B cell (primary cell): ENCODE measurements at regions of chr12 and their contacts with region 1.

Region 1: DNA sequence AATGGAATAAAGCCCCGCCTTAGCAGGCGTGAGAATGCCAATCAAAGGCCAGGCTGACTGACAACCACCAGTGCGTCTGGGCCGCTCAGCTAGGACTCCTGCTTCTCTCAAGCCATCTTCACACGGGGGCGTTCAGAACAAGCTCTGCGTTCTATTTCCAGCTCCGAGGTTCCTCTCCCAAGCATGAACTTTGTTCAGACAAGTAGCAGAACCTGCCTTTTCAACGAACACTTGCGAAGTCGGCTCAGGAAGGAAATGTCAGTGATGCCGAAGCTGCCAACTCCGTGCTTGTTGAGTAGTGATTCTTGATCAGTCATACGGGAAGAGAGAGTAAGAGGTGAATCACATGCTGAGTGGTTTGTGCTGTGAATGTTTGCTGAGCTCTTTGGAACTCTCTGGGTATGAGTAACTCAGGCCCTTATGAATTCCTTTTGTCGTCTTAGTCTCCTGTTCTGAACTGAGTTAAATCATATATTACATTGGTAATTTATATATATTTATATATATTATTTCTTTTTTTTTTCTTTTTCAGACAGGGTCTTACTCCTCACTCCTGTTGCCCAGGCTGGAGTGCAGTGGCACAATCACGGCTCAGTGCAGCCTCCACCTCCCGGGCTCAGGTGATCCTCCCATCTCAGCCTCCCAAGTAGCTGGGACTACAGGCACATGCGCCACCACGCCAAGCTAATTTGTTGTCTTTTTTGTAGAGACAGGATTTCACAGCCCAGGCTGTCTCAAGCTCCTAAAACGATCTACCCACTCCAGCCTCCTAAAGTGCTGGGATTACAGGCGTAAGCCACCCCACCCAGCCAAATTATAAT is 29.4 kb upstream of the BCL7A start:
- DNase-seq: peak; percentile 86
- ATAC-seq: peak; percentile 89
- H3K4me3 ChIP-seq: peak overlapping the region in 1 of 5 experiments; percentile 9
- H3K4me3 Mint-ChIP-seq: peak overlapping the region; percentile 84
- H3K27ac ChIP-seq: peak overlapping the region; percentile 62 to 70
- H3K27ac Mint-ChIP-seq: peak overlapping the region; percentile 96
- H3K4me1 ChIP-seq: peaks cover 38% of the 10 kb centered on the region in 2 donors
- H3K4me1 Mint-ChIP-seq: peaks cover 44% of the 10 kb centered on the region
- H3K27me3 ChIP-seq: no peaks in the 10 kb centered on the region
- H3K27me3 Mint-ChIP-seq: no peaks in the 10 kb centered on the region
- CTCF ChIP-seq: no peak

Region 2: DNA sequence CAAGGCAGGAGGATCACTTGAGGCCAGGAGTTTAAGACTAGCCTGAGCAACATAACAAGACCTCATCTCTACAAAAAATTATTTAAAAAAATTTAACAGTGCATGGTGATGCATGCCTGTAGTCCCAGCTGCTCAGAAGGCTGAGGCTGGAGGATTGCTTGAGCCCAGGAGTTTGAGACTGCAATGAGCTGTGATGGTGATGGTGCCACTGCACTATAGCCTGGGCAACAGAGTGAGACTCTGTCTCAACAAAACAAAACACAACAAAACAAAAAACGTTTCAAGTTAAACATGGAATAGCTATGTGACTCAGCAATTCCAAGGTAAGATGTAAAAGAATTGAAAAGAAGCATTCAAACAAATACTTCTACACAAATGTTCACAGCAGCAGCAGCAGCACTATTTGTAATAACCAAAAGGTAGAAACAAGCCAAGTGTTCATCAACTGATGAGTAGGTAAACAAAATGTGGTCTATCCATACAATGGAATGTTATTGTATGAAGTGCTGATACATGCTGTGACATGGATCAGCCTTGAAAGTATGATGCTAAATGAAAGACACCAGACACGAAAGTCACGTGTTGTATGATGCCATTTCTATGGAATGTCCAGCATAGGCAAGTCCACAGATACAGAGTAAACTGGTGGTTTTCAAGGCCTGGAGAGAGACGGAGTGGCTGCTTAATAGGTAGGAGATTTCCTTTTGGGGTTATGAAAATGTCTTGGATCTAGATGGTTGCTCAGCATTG is 42.4 kb before region 1 on chr12:
- CTCF ChIA-PET with region 1: no interaction called
- POLR2A ChIA-PET with region 1: no interaction called
- intact Hi-C with region 1: no loop called
- DNase-seq: no peak
- ATAC-seq: no peak
- H3K4me3 ChIP-seq: no peak overlapping the region
- H3K4me3 Mint-ChIP-seq: no peak overlapping the region
- H3K27ac ChIP-seq: no peak overlapping the region
- H3K27ac Mint-ChIP-seq: no peak overlapping the region
- H3K4me1 ChIP-seq: no peaks in the 10 kb centered on the region
- H3K4me1 Mint-ChIP-seq: no peaks in the 10 kb centered on the region
- H3K27me3 ChIP-seq: no peaks in the 10 kb centered on the region
- H3K27me3 Mint-ChIP-seq: no peaks in the 10 kb centered on the region
- CTCF ChIP-seq: no peak

Region 3: DNA sequence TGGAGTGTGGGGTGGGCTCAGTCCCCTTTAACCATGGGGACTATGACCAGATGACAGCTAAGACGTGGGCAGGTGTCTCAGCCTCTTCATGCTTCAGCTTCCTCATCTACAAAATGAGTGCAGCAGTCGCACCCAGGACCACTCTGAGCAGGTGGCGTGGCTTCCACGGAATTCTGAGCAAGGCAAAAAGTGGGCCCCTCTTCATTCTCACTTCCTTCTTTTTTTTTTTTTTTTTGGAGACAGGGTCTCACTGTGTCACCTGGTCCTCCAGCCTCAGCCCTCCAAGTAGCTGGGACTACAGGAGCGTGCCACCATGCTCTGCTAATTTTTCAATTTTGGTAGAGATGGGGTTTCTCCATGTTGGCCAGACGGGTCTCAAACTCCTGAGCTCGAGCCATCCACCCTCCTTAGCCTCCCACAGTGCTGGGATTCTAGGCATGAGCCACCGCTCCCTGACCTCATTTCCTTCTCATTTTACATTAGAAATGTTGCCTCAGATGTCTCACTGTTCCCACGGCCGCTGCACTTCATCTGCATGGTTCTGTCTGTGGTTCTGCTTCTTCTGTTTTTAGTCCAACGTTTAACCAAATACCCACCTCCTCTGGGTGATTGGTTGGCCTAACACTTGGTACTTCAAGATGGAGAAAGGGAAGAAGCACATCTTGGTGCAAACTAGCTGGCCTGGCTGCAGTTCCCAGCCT is 11.9 kb before region 1 on chr12:
- CTCF ChIA-PET with region 1: interaction called, 14 read pairs
- POLR2A ChIA-PET with region 1: interaction called, 17 read pairs
- intact Hi-C with region 1: loop called (anchors 1 kb)
- DNase-seq: peak; percentile 85
- ATAC-seq: peak; percentile 74
- H3K4me3 ChIP-seq: peak overlapping the region in 4 of 5 experiments; percentile 2 to 39 (median 12)
- H3K4me3 Mint-ChIP-seq: peak overlapping the region; percentile 81
- H3K27ac ChIP-seq: peak overlapping the region; percentile 63 to 81
- H3K27ac Mint-ChIP-seq: peak overlapping the region; percentile 95
- H3K4me1 ChIP-seq: peaks cover 53 to 64% of the 10 kb centered on the region in 2 donors
- H3K4me1 Mint-ChIP-seq: peaks cover 55% of the 10 kb centered on the region
- H3K27me3 ChIP-seq: no peaks in the 10 kb centered on the region
- H3K27me3 Mint-ChIP-seq: no peaks in the 10 kb centered on the region
- CTCF ChIP-seq: no peak

Region 4: GRCh38 chr12:122021822-122022526 is 29.7 kb after region 1 on chr12 and contains the start of gene BCL7A:
- CTCF ChIA-PET with region 1: interaction called, 16 read pairs
- POLR2A ChIA-PET with region 1: interaction called, 19 read pairs
- intact Hi-C with region 1: no loop called
- DNase-seq: peak; percentile 90
- ATAC-seq: peak; percentile 73
- H3K4me3 ChIP-seq: peak within 1 kb of the TSS; percentile 26 to 86 (median 78)
- H3K4me3 Mint-ChIP-seq: peak within 1 kb of the TSS; percentile 94
- H3K27ac ChIP-seq: peak within 1 kb of the TSS; percentile 67 to 80
- H3K27ac Mint-ChIP-seq: peak within 1 kb of the TSS; percentile 98
- H3K4me1 ChIP-seq: peaks cover 32 to 51% of the 10 kb centered on the region in 2 donors
- H3K4me1 Mint-ChIP-seq: peaks cover 38% of the 10 kb centered on the region
- H3K27me3 ChIP-seq: no peaks in the 10 kb centered on the region
- H3K27me3 Mint-ChIP-seq: no peaks in the 10 kb centered on the region
- CTCF ChIP-seq: no peak
- total RNA-seq, gene BCL7A: 75.6 and 75.9 TPM in 2 replicates

Region 5: DNA sequence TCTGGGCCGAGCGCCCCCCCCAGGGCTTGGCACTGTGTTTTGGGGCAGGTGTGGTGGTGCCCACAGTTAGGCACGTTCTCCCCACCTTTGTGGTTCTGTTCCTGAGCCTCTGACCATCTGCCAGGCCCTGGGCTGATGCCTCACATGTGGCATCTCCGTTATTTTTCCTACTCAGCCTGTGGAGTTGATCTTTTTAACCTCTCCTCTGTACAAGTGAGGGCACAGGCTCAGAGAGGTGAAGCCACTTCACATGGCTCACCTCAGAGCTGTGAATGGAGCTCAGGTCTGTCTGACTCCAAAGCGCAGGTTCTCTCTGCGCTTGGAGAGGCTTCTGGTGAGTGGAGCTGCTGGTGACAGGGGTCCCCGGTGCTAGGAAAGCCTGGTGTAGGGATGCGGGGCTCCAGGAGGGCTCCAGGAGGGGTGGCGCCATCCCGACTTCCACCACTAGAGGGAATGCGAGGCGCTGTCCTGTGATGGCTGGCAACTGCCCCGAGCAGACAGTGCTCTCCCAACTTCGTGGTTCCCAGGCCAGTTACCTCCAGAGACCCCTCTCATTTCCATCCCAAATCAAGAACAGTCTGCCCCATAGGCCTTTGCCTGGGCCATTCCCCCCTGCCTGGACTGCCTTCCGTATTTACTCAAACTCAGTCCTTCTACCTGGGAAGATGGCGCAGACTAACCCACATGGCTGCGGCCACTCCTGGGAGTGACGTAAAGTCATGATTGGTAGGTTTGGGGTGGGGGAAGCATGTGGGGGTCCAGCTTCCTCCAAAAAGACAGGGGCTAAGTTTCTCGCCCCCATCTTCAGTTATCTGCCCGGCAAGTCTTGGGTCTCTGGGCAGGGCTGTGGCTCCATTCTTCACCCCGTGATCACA is 39.3 kb after region 1 on chr12:
- CTCF ChIA-PET with region 1: interaction called, 16 read pairs
- POLR2A ChIA-PET with region 1: interaction called, 3 read pairs
- intact Hi-C with region 1: no loop called
- DNase-seq: peak; percentile 70
- ATAC-seq: peak; percentile 39
- H3K4me3 ChIP-seq: no peak overlapping the region
- H3K4me3 Mint-ChIP-seq: peak overlapping the region; percentile 29
- H3K27ac ChIP-seq: peak overlapping the region; percentile 18 to 70
- H3K27ac Mint-ChIP-seq: peak overlapping the region; percentile 71
- H3K4me1 ChIP-seq: peaks cover 51 to 67% of the 10 kb centered on the region in 2 donors
- H3K4me1 Mint-ChIP-seq: peaks cover 61% of the 10 kb centered on the region
- H3K27me3 ChIP-seq: no peaks in the 10 kb centered on the region
- H3K27me3 Mint-ChIP-seq: no peaks in the 10 kb centered on the region
- CTCF ChIP-seq: peak; percentile 81